Transverse colon (tissue), 4 donors: ENCODE measurements at regions of chr16 and their contacts with region 1.

Region 1: GRCh38 chr16:17529982-17530765 is 59.4 kb upstream of the XYLT1 start:
- DNase-seq: peak; percentile 8
- H3K4me3 ChIP-seq: peak overlapping the region in 1 of 4 donors; percentile 15
- H3K27ac ChIP-seq: no peak overlapping the region
- H3K4me1 ChIP-seq: no peaks in the 10 kb centered on the region
- H3K27me3 ChIP-seq: no peaks in the 10 kb centered on the region
- CTCF ChIP-seq: no peak
- EP300 ChIP-seq: no peak
- POLR2A ChIP-seq: no peak

Region 2: GRCh38 chr16:17377360-17378324 is 152.5 kb before region 1 on chr16:
- in situ Hi-C with region 1: no loop called
- intact Hi-C with region 1: no loop called
- DNase-seq: no peak
- H3K4me3 ChIP-seq: no peak overlapping the region
- H3K27ac ChIP-seq: peak overlapping the region; percentile 72 to 84 (median 78)
- H3K4me1 ChIP-seq: peaks cover 18 to 46% (median 32%) of the 10 kb centered on the region in 4 donors
- H3K27me3 ChIP-seq: no peaks in the 10 kb centered on the region
- CTCF ChIP-seq: no peak
- EP300 ChIP-seq: no peak
- POLR2A ChIP-seq: no peak

Region 3: DNA sequence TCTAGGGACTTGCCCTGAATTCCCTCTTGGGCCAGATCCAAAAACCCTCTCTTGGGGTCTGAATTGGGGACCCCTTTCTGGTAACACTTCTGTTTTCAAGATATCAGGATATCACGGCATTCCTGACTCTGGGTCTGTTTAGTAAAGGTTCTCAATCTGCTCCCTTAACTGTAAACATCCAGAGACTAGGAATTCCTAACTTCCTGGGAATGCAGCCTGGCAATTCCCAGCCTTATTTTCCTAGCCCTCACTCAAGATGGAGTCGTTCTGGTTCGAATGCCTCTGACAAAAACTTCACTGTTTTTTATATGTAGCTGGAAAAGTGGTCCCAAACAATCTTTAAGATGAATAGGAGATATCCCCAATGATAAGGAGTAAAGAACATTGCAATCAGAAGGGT is 82.2 kb after region 1 on chr16:
- in situ Hi-C with region 1: no loop called
- intact Hi-C with region 1: loop called (anchors 5 kb)
- DNase-seq: no peak
- H3K4me3 ChIP-seq: no peak overlapping the region
- H3K27ac ChIP-seq: no peak overlapping the region
- H3K4me1 ChIP-seq: no peaks in the 10 kb centered on the region
- H3K27me3 ChIP-seq: peaks cover 6% of the 10 kb centered on the region
- CTCF ChIP-seq: no peak
- EP300 ChIP-seq: no peak
- POLR2A ChIP-seq: no peak